Activated T-helper 2 cell treated with anti-CD3 and anti-CD28 coated beads, Interferon-gamma antibody, Interleukin-2, Interleukin-4, amounts not matched to agents 10 μg/mL and 5 μg/mL and 100 μg/mL, durations not matched to agents 14 hours and 24 hours and 36 hours (primary cell): ENCODE measurements at regions of chr4 and their contacts with region 1.

Region 1: DNA sequence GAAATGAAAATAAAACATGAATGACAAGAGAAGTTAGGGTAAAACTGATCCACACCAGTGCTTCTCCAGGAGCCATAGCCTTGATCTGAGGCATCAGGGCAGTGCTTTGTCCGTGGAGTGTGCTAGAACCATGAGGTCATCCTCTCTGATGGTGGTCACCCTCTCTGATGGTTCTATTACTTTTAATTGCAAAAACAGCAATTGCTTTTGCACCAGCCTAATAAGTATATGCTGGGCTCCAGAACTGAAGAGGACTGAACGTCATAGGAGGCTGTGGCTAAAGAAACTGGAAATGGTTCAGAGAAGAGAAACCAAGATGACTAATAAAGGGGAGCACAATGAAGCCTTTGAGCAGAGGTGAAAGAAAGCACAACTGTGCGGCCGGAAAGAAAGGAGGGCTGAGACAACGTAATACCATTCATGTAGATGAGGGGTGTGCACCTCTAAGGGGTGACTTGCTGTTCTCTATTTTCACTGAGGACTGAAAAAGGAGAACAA is 17.0 kb upstream of the TMEM154 start:
- DNase-seq: peak; percentile 41
- H3K4me3 Mint-ChIP-seq: no peak overlapping the region
- H3K27ac Mint-ChIP-seq: no peak overlapping the region
- H3K4me1 Mint-ChIP-seq: peaks cover 13% of the 10 kb centered on the region
- H3K27me3 Mint-ChIP-seq: peaks cover 4% of the 10 kb centered on the region

Region 2: DNA sequence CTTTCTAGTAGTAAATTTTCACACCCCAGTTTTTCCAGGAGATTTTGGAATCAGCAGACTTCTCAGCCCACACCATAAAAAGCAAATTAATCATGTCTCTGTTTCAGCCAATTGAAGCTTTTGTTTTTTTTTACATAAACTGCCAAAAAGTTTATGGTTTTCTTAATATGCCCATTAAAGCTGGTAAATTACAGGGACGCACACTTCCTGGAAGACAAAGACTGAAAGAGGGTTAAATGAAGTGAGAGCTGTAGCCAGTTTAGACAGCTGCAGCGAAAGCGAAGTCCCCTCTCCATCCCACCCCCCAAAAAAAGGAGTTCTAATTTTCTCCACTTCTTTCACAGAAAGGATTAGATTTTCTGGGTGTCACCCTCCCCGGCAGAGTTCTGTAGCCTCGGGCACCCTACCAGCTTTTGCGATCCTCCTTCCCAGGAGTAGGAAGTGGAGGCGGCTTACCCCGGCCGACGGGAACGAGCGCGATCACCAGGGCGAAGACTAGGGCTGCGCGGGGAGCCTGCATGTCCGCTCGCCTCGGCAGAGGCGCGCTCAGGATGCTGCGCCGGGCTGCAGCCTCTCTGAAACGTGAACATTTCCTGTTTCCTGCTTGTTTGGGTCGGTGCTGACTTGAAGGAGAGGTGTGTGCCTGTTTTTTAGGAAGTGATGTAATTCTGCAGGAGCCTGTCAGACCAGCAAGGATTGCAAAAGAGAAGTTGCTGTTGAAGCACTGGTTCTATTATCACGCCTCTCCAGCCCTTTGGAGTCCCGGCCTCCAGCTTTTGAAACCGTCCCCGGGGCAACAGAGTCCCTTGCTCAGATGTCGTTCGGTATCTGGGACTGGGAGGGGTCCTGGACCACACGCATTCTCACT is 17.2 kb before region 1 on chr4 and contains the start of gene TMEM154:
- intact Hi-C with region 1: loop called (anchors 2 kb)
- DNase-seq: peak; percentile 71
- H3K4me3 Mint-ChIP-seq: peak within 1 kb of the TSS; percentile 87
- H3K27ac Mint-ChIP-seq: peak within 1 kb of the TSS; percentile 71
- H3K4me1 Mint-ChIP-seq: peaks cover 55% of the 10 kb centered on the region
- H3K27me3 Mint-ChIP-seq: no peaks in the 10 kb centered on the region
- total RNA-seq, gene TMEM154: 10.3 and 12.1 TPM in 2 replicates

Region 3: DNA sequence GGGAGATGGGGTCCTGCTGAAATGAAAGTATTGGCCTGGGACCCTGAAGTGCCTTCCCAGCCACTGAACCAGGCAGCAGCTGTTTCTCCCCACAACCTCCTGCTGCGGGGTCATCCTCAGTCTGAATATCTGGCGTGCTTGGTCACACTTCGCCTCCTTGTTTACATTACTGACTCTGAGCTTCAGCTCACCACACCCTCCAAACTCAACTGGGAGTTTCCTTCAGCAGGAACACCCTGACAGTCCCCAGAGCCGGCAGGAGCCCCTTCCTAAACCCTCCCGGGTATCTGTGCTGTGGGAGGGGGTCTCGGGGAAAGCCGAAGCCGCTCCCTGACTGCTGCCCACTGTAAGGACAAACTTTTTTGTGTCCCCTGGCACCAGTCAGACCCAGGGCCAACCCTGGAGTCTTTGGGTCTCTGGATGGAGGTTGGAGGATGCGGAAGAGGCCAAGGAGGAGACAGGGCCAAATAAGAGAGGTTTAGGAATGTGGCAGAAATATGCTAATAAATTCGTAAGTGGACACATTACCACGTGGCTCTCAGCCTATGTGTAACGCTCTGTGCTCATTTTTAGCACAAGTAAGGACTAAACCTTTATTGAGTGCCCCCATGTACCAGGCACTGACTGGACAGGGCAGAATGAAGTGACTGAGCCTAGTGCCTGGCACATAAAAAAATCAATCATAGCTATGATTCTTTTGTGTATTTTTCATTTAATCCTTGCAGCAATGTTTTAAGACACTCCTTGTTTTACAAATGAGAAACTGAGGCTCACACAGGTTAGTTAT is 260.0 kb after region 1 on chr4:
- intact Hi-C with region 1: no loop called
- DNase-seq: no peak
- H3K4me3 Mint-ChIP-seq: no peak overlapping the region
- H3K27ac Mint-ChIP-seq: no peak overlapping the region
- H3K4me1 Mint-ChIP-seq: no peaks in the 10 kb centered on the region
- H3K27me3 Mint-ChIP-seq: peaks cover 17% of the 10 kb centered on the region